ENCODE measurements at regions of chr4 and their contacts with region 1.

Region 1: GRCh38 chr4:40316782-40317635 is 18.1 kb upstream of the CHRNA9 start:
- DNase-seq: peak in 1 of 2 experiments; percentile 88
- ATAC-seq: peak; percentile 80 to 94
- H3K4me3 ChIP-seq: peak overlapping the region; percentile 28; the same call in 2 of the 3 replicates
- H3K27ac ChIP-seq: peak overlapping the region; percentile 91 to 98
- H3K4me1 ChIP-seq: peaks cover 57% of the 10 kb centered on the region
- CTCF ChIP-seq: peak; percentile 71
- EP300 ChIP-seq: no peak; a peak in 1 of 5 replicates
- POLR2A ChIP-seq: no peak
- RAD21 ChIP-seq: peak; percentile 55 to 59; a peak in 4 of 5 replicates

Region 2: GRCh38 chr4:40056716-40057585 is 260.1 kb before region 1 on chr4 and contains the start of gene N4BP2:
- CTCF ChIA-PET with region 1: interaction called, 14 read pairs
- POLR2A ChIA-PET with region 1: interaction called, 61 read pairs
- DNase-seq: peak; percentile 59 to 91
- ATAC-seq: peak; percentile 82
- H3K4me3 ChIP-seq: peak within 1 kb of the TSS; percentile 78
- H3K27ac ChIP-seq: peak within 1 kb of the TSS; percentile 100
- H3K4me1 ChIP-seq: peaks cover 11% of the 10 kb centered on the region; the same call in 2 of the 3 replicates
- CTCF ChIP-seq: peak; percentile 73
- EP300 ChIP-seq: 0 out of 5 replicates have a peak, but pooled peaks of 1 of the 2 experiments have one; percentile 20
- POLR2A ChIP-seq: peak; percentile 46
- RAD21 ChIP-seq: peak; percentile 57 to 76; a peak in 4 of 5 replicates
- polyA plus RNA-seq, gene N4BP2: 8.3 and 10.4 TPM in 2 replicates

Region 3: GRCh38 chr4:40149960-40150385 is 167.0 kb before region 1 on chr4:
- CTCF ChIA-PET with region 1: interaction called, 11 read pairs
- POLR2A ChIA-PET with region 1: no interaction called
- DNase-seq: peak; percentile 13 to 83
- ATAC-seq: peak in 1 of 2 experiments; percentile 77; a peak in 3 of 6 replicates
- H3K4me3 ChIP-seq: no peak overlapping the region
- H3K27ac ChIP-seq: peak overlapping the region; percentile 46; a peak in 4 of 6 replicates
- H3K4me1 ChIP-seq: no peaks in the 10 kb centered on the region
- CTCF ChIP-seq: peak; percentile 70
- EP300 ChIP-seq: no peak
- POLR2A ChIP-seq: no peak
- RAD21 ChIP-seq: peak; percentile 81

Region 4: DNA sequence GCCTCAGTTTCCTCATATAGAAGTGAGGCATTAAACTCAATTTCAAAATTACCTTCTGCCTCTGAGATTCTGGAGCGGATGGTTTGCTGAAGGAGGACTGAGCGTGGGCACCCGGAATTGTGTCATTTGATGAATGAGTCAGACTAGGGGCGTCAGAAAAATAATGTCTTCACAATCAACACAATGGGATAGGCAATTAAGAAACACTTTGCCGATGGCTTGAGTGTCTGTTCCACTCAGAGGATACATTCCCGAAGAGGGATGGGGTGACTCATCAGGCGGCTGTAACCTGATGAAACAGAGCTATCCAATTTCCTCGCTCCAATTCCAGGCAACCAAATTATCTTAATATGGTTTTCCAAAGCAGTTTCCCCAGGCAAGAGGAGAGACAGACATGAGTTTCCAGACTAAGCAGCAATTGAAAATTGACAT is 16.9 kb after region 1 on chr4:
- CTCF ChIA-PET with region 1: interaction called, 38 read pairs
- POLR2A ChIA-PET with region 1: interaction called, 3 read pairs
- DNase-seq: peak; percentile 45 to 54
- ATAC-seq: peak; percentile 60 to 72; a peak in 4 of 6 replicates
- H3K4me3 ChIP-seq: no peak overlapping the region
- H3K27ac ChIP-seq: peak overlapping the region; percentile 79 to 88
- H3K4me1 ChIP-seq: peaks cover 43% of the 10 kb centered on the region
- CTCF ChIP-seq: no peak
- EP300 ChIP-seq: peak in 1 of 2 experiments; percentile 30; a peak in 1 of 5 replicates
- POLR2A ChIP-seq: no peak
- RAD21 ChIP-seq: no peak

Region 5: DNA sequence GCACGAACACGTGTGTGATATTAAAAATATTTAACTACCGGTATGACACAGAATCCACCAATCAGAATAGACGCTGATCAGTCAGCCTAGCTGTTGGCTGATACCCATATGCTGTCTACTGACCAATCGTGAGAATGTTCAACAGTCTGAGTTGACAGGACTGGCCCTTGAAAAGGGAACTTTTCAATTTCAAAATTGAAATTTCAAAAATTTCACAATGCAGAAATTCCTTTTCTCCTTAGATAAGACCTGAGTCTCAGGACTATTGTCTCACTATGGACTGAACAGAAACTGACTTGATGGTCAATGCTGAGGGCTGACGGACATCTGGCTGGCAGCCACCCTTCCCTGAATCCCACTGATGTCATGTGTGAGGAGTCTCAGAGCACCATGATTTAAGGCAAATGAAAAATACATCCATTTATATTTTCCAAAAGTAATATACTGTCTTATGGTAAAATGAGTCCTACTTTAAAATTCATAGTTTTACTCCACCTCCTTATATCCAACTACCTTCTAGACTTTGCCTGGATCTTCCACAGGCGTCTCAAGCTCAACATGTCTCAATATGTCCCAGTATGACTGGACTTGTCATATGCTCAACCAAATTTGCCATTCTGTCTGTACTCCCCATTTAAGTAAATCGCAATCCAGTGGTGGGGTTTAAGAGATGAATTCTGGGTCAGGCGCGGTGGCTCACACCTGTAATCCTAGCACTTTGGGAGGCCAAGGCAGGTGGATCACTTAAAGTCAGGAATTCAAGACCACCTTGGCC is 96.2 kb after region 1 on chr4:
- CTCF ChIA-PET with region 1: no interaction called
- POLR2A ChIA-PET with region 1: no interaction called
- DNase-seq: no peak
- ATAC-seq: no peak
- H3K4me3 ChIP-seq: no peak overlapping the region
- H3K27ac ChIP-seq: no peak overlapping the region
- H3K4me1 ChIP-seq: peaks cover 16% of the 10 kb centered on the region
- CTCF ChIP-seq: no peak
- EP300 ChIP-seq: no peak
- POLR2A ChIP-seq: no peak
- RAD21 ChIP-seq: no peak

Region 6: DNA sequence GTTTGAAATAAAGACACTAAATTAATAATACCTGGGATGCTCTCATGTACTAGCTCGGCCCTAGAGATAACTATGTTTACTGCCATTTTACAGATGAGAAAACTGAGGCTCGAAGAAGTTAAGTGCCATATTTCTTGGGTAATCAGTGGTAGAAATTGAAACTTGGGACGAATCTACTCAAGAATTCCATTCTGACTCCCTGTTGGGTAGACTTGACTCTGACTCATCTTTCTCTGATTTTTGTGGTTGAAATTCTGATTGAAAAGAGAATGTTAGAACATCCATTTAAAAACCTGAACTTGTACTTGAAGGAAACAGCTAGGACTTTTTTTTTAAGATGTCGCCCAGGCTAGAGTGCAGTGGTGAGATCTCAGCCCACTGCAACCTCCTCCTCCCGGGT is 382.6 kb after region 1 on chr4:
- CTCF ChIA-PET with region 1: no interaction called
- POLR2A ChIA-PET with region 1: no interaction called
- DNase-seq: no peak
- ATAC-seq: no peak
- H3K4me3 ChIP-seq: no peak overlapping the region
- H3K27ac ChIP-seq: no peak overlapping the region
- H3K4me1 ChIP-seq: peaks cover 6% of the 10 kb centered on the region; the same call in 1 of the 3 replicates
- CTCF ChIP-seq: no peak
- EP300 ChIP-seq: no peak
- POLR2A ChIP-seq: no peak
- RAD21 ChIP-seq: no peak

Measured in A549 (cell line).